ENCODE measurements at regions of chr4 and their contacts with region 1.

Region 1: GRCh38 chr4:95124906-95125504 is 367.2 kb downstream of the BMPR1B start:
- ATAC-seq: peak in 7 of 8 experiments; percentile 39 to 84 (median 73)
- H3K4me3 ChIP-seq: no peak overlapping the region
- H3K27ac ChIP-seq: no peak overlapping the region
- H3K4me1 ChIP-seq: no peaks in the 10 kb centered on the region

Region 2: DNA sequence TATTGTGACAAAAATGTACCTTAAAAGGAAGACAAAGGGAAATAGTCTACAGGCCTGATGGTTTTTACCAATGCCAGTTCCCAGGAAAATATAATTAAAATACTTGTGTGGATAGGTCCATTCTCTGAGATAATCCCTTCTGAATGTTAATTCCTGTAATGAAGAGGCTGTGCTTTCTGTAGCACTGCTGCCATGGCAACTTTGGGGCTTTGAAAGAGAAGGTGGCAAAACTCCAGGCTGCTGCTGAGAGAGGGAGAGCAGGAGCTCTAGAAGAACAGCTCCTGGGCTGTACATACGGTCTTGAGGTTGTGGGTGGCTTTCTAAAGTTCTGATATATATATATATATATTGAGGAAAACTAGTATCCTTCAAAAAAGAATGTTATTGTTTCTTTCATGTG is 547.9 kb before region 1 on chr4:
- in situ Hi-C with region 1: no loop called
- ATAC-seq: peak; percentile 71 to 98 (median 86)
- H3K4me3 ChIP-seq: no peak overlapping the region
- H3K27ac ChIP-seq: no peak overlapping the region
- H3K4me1 ChIP-seq: peaks cover 3 to 17% of the 10 kb centered on the region in 2 donors

Region 3: GRCh38 chr4:94621491-94622080 is 503.4 kb before region 1 on chr4:
- in situ Hi-C with region 1: loop called in 5 of 9 experiments (anchors 25 kb)
- ATAC-seq: peak in 1 of 8 experiments; percentile 41
- H3K4me3 ChIP-seq: no peak overlapping the region
- H3K27ac ChIP-seq: no peak overlapping the region
- H3K4me1 ChIP-seq: no peaks in the 10 kb centered on the region

Region 4: GRCh38 chr4:94641702-94642560 is 483.1 kb before region 1 on chr4:
- in situ Hi-C with region 1: loop called in 2 of 9 experiments (anchors 25 kb)
- ATAC-seq: peak in 4 of 8 experiments; percentile 32 to 75 (median 46)
- H3K4me3 ChIP-seq: no peak overlapping the region
- H3K27ac ChIP-seq: no peak overlapping the region
- H3K4me1 ChIP-seq: peaks cover 0 to 2% of the 10 kb centered on the region in 2 donors

Region 5: DNA sequence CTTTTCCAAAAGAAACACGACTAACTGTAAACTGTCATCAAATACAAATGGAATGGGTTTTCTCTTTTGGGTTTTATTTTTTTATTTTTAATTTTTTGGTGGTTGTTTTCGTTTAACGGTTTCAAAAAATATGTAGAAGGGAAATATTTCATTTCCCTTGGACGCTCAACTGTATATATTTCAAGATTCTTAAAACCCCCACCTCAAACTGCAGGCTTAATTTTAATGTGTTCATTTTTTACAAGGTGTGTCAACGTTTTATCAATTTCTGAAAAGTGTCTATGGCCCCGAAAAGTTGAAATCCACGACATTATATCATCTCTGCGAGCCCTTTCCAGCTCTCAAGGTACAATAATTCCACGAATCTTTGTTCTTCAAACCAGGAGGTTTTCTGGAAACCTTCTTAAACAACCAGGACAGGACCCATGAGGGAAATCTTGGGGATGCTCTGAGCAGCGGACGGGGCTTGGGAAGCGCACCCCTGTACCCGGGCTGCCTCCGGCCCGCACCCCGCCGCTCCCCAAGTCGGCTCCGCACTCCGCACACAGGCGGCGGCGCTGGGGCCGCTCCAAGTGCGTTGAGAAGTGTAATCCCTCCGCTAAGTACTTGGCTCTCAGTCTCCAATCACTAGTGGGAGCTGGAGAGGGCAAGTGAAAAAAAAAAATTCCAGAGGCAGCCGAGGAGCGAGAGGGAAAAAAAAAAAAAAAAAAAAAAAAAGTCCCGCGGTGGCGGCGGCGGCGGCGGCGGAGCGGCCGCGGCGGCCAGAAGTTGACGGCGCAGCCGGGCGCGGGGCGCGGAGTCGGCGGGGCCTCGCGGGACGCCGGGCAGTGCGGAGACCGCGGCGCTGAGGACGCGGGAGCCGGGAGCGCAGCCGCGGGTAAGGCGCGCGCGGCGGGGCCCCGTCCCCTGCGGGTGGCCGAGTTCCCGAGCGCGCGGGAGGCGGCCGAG is 367.5 kb before region 1 on chr4 and contains the start of gene BMPR1B:
- in situ Hi-C with region 1: loop called in 1 of 9 experiments (anchors 25 kb)
- ATAC-seq: peak; percentile 43 to 82 (median 78)
- H3K4me3 ChIP-seq: peak within 1 kb of the TSS; percentile 52 to 99 (median 87)
- H3K27ac ChIP-seq: peak within 1 kb of the TSS in 1 of 2 donors; percentile 74
- H3K4me1 ChIP-seq: no peaks in the 10 kb centered on the region
- total RNA-seq, gene BMPR1B: 0.17 to 69.0 (median 1.9) TPM

Region 6: DNA sequence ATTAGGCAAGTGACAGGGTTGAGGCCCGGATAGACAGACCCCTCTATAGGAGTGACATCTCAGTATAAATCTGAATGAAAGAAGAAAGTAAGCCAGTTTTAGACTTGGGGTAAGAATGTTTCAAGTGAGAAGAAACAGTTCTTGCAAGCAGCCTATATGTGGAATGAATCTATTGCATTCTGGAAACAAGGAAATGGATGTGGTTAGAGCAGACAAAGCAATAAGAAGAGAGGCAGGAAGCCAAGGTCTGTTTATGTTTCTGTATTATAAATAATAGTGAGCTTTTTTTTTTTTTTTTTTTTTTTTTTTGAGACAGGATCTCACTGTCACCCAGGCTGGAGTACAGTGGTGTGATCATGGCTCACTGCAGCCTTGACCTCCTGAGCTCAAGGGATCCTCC is 168.0 kb after region 1 on chr4:
- in situ Hi-C with region 1: no loop called
- ATAC-seq: no peak
- H3K4me3 ChIP-seq: no peak overlapping the region
- H3K27ac ChIP-seq: no peak overlapping the region
- H3K4me1 ChIP-seq: peaks cover 0 to 5% of the 10 kb centered on the region in 2 donors